ENCODE measurements at regions of chr1 and their contacts with region 1.

Region 1: DNA sequence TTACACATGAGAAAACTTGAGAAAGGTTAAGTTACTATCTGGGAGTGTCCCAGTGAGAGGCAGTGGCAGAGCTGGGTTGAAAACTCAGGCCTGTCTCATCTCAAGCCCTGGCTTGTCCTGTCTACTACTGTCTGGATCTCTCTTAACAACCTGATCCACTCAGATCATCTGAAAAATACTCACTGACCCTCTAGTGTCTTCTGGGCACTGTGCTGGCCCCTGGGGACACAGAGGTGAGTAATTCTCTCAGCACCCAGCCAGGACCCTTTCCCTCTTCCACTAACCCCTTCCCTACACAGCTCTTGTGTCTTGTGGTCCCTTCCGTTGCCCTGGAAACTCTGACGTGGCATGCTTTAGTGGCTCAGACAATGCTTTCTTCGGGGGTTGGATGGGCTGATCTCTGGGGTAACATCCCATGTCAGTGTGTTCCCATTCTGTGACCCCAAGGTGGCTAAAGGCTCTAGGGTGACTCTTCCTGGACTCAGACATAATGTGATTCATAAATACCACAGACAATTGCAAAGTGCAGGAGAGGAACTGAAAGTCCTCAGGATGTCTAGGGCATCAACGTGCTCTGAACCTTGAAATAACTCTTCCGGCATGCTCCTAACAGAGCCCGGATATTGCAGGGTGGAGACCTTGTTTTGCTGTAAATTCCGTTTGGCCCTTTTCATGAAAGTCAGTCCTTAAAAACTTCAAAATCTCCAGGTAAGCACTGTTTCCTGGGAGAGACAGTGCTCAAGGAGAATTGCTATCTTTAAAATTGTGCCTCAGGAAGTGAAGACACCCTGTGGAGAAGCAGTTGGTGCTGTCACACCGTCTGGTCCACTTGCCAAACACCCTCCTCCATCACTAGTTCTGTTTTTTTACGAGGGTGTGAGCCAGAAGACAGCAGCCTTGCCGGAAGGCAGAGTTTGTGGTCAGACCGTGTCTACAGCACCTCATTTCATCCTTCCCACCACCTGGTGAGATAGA is 4.0 kb downstream of the SHISAL2A start:
- DNase-seq: peak; percentile 83 to 92 (median 85)
- H3K4me3 ChIP-seq: peak overlapping the region; percentile 0 to 20
- H3K4me3 Mint-ChIP-seq: peak overlapping the region; percentile 77 to 91 (median 87)
- H3K27ac ChIP-seq: peak overlapping the region; percentile 85
- H3K27ac Mint-ChIP-seq: peak overlapping the region; percentile 96 to 100 (median 100)
- H3K4me1 ChIP-seq: peaks cover 92% of the 10 kb centered on the region
- H3K4me1 Mint-ChIP-seq: peaks cover 61 to 86% (median 75%) of the 10 kb centered on the region in 4 donors
- H3K27me3 ChIP-seq: no peaks in the 10 kb centered on the region
- H3K27me3 Mint-ChIP-seq: no peaks in the 10 kb centered on the region

Region 2: GRCh38 chr1:52404116-52404986 is 232.7 kb before region 1 on chr1 and contains the starts of genes ORC1 and PRPF38A:
- CTCF ChIA-PET with region 1: interaction called, 6 read pairs
- POLR2A ChIA-PET with region 1: interaction called, 7 read pairs
- intact Hi-C with region 1: loop called (anchors 1 kb)
- DNase-seq: peak; percentile 94 to 98 (median 96)
- H3K4me3 ChIP-seq: peak within 1 kb of the TSS; percentile 85 to 88
- H3K4me3 Mint-ChIP-seq: peak within 1 kb of the TSS; percentile 98 to 100 (median 100)
- H3K27ac ChIP-seq: peak within 1 kb of the TSS; percentile 91
- H3K27ac Mint-ChIP-seq: peak within 1 kb of the TSS; percentile 94 to 99 (median 99)
- H3K4me1 ChIP-seq: peaks cover 25% of the 10 kb centered on the region
- H3K4me1 Mint-ChIP-seq: peaks cover 22 to 44% (median 36%) of the 10 kb centered on the region in 4 donors
- H3K27me3 ChIP-seq: no peaks in the 10 kb centered on the region
- H3K27me3 Mint-ChIP-seq: no peaks in the 10 kb centered on the region
- total RNA-seq, gene ORC1: 1.1 to 1.5 TPM
- total RNA-seq, gene PRPF38A: 69.7 to 70.4 TPM

Region 3: DNA sequence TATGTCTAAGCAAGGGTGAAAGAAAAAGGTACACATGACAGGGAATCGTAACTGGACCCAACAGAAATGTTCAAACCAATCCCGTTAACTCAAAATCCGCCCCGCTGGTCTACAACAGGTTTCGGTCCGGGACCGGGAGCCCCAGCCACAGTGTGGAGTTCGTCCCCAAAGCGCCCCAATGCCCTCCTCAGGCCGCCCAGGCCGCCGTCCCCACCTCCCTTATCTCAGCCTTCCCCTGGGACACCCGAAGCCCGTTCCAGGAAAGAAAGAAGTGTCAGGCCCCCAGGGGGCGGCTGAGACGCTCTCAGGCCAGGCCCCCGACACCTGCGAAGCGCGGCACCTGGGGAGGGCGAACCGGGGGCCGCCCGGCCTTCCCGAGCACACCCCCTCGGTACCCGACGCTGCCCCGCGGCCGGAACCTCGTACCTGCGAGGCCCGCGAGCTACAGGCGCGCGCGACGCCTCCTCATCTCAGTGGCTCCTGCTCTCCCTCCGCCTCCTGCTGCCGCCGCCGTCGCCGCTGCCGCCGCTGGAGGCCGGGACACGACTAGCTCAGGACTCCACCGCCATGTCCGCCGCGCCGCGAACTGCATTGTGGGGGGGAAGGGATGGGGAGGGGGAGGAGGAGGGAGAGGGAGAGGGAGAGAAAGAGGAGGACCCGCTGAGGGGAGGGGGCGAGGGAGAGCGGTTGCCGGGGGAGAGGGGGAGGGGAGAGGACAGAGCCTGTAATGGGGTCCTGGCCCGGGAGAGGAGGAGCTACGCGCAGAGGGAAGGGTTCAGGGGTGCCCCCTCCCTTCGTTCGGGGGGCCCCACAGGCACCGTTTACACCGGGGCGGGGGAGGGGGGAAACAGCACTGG is 84.3 kb before region 1 on chr1 and contains the start of gene TUT4:
- CTCF ChIA-PET with region 1: interaction called, 8 read pairs
- POLR2A ChIA-PET with region 1: interaction called, 117 read pairs
- intact Hi-C with region 1: loop called (anchors 1 kb)
- DNase-seq: peak; percentile 67 to 83 (median 73)
- H3K4me3 ChIP-seq: peak within 1 kb of the TSS; percentile 68 to 95
- H3K4me3 Mint-ChIP-seq: peak within 1 kb of the TSS in 7 of 8 donors; percentile 48 to 87 (median 77)
- H3K27ac ChIP-seq: peak within 1 kb of the TSS; percentile 92
- H3K27ac Mint-ChIP-seq: peak within 1 kb of the TSS; percentile 57 to 91 (median 83)
- H3K4me1 ChIP-seq: peaks cover 41% of the 10 kb centered on the region
- H3K4me1 Mint-ChIP-seq: peaks cover 25 to 41% (median 33%) of the 10 kb centered on the region in 4 donors
- H3K27me3 ChIP-seq: no peaks in the 10 kb centered on the region
- H3K27me3 Mint-ChIP-seq: no peaks in the 10 kb centered on the region
- total RNA-seq, gene TUT4: 151 to 159 TPM

Region 4: DNA sequence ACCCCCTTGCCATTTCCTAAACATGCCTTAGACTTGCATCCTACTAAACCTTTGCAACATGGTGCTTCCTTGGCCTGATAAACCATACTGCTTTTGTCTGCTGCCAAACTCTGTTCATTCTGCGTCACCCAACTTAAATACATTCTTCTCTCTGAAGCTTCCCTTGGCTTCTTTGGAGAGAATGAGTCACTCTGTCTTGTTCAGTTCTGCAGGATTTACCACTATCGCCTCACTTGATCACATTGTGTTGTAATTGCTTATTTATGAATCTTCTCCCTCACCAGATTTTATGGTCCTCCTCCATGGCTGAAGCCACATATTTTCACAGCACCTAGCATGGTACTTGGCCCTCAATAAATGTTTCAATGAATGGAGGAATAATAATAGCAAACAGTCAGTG is 62.4 kb before region 1 on chr1:
- CTCF ChIA-PET with region 1: no interaction called
- POLR2A ChIA-PET with region 1: no interaction called
- intact Hi-C with region 1: no loop called
- DNase-seq: no peak
- H3K4me3 ChIP-seq: no peak overlapping the region
- H3K4me3 Mint-ChIP-seq: no peak overlapping the region
- H3K27ac ChIP-seq: no peak overlapping the region
- H3K27ac Mint-ChIP-seq: peak overlapping the region in 1 of 7 donors; percentile 17
- H3K4me1 ChIP-seq: peaks cover 3% of the 10 kb centered on the region
- H3K4me1 Mint-ChIP-seq: peaks cover 9 to 19% (median 13%) of the 10 kb centered on the region in 4 donors
- H3K27me3 ChIP-seq: no peaks in the 10 kb centered on the region
- H3K27me3 Mint-ChIP-seq: no peaks in the 10 kb centered on the region

Region 5: DNA sequence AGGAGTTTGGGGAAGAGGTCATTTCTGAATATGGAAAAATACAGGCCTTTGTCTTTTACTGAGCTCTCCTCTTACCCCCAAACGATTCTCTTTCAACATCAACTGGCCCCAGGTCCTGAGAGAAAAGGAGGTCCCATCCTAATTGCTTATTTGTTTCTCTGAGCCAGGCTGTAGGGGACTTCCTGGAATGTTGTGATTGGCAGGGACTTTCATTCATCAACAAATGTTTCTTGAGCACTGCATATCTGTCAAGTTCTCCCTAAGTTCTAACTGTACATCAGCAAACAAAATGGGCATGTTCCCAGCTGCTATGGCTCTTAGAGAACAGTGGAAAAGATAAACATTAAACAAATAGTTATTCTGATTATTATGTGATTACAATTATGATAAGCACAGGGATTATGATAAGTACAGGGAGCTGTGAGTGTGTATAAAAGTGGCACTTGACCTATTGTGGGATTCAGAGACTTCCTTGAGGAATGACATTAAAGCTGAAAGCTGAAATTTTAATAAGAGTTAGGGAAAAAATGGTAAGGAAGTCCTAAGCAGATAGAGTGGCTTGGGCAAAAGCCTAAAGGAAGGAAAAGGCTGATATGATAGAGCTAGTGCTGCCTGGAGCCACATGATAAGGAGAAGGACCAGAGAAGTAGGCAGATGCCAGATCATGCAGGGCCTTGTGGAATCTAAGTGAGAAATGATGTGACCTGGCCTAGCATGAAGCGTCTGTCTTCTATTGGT is 23.2 kb before region 1 on chr1:
- CTCF ChIA-PET with region 1: interaction called, 4 read pairs
- POLR2A ChIA-PET with region 1: interaction called, 188 read pairs
- intact Hi-C with region 1: no loop called
- DNase-seq: no peak
- H3K4me3 ChIP-seq: no peak overlapping the region
- H3K4me3 Mint-ChIP-seq: peak overlapping the region in 1 of 8 donors; percentile 20
- H3K27ac ChIP-seq: no peak overlapping the region
- H3K27ac Mint-ChIP-seq: peak overlapping the region; percentile 23 to 87 (median 52)
- H3K4me1 ChIP-seq: peaks cover 11% of the 10 kb centered on the region
- H3K4me1 Mint-ChIP-seq: peaks cover 12 to 36% (median 25%) of the 10 kb centered on the region in 4 donors
- H3K27me3 ChIP-seq: no peaks in the 10 kb centered on the region
- H3K27me3 Mint-ChIP-seq: no peaks in the 10 kb centered on the region

Region 6: GRCh38 chr1:52662645-52663313 is 25.8 kb after region 1 on chr1:
- CTCF ChIA-PET with region 1: interaction called, 9 read pairs
- POLR2A ChIA-PET with region 1: interaction called, 15 read pairs
- intact Hi-C with region 1: loop called (anchors 5 kb)
- DNase-seq: no peak
- H3K4me3 ChIP-seq: no peak overlapping the region
- H3K4me3 Mint-ChIP-seq: no peak overlapping the region
- H3K27ac ChIP-seq: no peak overlapping the region
- H3K27ac Mint-ChIP-seq: peak overlapping the region in 2 of 7 donors; percentile 36 to 70
- H3K4me1 ChIP-seq: no peaks in the 10 kb centered on the region
- H3K4me1 Mint-ChIP-seq: peaks cover 0 to 10% (median 6%) of the 10 kb centered on the region in 4 donors
- H3K27me3 ChIP-seq: no peaks in the 10 kb centered on the region
- H3K27me3 Mint-ChIP-seq: no peaks in the 10 kb centered on the region